Dendritic cell treated with granulocyte-macrophage colony-stimulating factor and Interleukin-4, amounts not matched to agents 40 ng/mL and 50 ng/mL, for 4 days (primary cell): ENCODE measurements at regions of chr15 and their contacts with region 1.

Region 1: GRCh38 chr15:49046220-49047102 is at the start of gene SECISBP2L:
- H3K4me3 Mint-ChIP-seq: peak within 1 kb of the TSS; percentile 94
- H3K27ac Mint-ChIP-seq: peak within 1 kb of the TSS; percentile 91
- H3K4me1 Mint-ChIP-seq: peaks cover 29% of the 10 kb centered on the region
- H3K27me3 Mint-ChIP-seq: no peaks in the 10 kb centered on the region

Region 2: DNA sequence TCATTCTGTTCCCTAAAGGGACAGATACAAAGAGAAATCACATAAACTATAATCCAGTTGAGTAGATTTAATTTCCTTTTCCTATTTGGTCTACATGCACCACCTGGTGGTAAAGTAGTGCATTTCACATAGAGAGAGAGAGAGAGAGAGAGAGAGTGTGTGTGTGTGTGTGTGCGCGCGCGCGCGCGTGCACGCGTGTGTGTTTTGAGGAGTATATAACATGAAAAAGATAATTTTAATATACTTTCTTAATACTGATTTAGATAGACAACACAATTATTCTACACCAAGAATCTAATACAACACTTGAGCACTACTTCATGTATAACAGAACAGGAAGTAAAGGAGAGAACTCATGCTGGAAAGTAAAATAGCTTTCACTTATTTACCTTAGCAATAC is 375.5 kb after region 1 on chr15:
- intact Hi-C with region 1: loop called (anchors 5 kb)
- H3K4me3 Mint-ChIP-seq: no peak overlapping the region
- H3K27ac Mint-ChIP-seq: no peak overlapping the region
- H3K4me1 Mint-ChIP-seq: no peaks in the 10 kb centered on the region
- H3K27me3 Mint-ChIP-seq: no peaks in the 10 kb centered on the region